Activated B cell treated with CpG ODN at 0.5 μM for 24 hours (primary cell): ENCODE measurements at regions of chr10 and their contacts with region 1.

Region 1: DNA sequence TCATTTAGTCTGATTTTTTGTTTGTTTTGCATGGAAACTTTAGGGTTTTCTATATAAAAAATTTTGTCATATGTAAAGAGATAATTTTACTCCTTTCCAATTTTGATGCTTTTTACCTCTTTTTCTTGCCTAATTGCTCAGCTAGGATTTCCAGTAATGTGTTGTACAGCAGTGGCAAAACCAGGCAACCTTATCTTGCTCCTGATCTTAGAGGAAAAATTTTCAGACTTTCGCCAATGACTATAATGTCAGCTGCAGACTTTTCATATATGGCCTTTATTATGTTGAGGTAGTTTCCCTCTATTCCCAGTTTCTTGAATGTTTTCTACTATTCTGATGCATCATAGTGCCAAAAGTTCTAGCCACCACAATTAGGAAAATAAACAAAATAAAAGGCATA is 126.3 kb downstream of the ALOX5 start:
- DNase-seq: no peak
- ATAC-seq: no peak
- H3K4me3 Mint-ChIP-seq: no peak overlapping the region
- H3K27ac Mint-ChIP-seq: no peak overlapping the region
- H3K4me1 Mint-ChIP-seq: peaks cover 8% of the 10 kb centered on the region
- H3K27me3 Mint-ChIP-seq: no peaks in the 10 kb centered on the region
- CTCF ChIP-seq: no peak

Region 2: DNA sequence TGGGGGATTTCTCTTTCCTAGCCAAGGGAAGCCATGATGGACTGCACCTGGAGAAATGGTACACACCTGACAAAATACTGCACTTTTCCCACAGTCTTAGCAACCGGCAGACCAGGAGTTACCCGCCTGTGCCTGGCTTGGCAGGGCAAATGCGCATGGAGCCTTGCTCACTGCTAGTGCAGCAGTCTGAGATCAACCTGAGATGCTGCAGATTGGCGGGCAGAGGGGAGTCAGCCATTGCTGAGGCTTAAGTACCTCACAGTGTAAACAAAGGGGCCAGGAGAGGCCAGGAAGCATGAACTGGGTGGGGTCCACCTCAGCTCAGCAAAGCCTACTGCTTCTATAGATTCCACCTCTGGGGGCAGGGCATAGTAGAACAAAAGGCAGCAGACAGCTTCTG is 234.3 kb before region 1 on chr10:
- CTCF ChIA-PET with region 1: no interaction called
- POLR2A ChIA-PET with region 1: no interaction called
- intact Hi-C with region 1: no loop called
- DNase-seq: no peak
- ATAC-seq: no peak
- H3K4me3 Mint-ChIP-seq: no peak overlapping the region
- H3K27ac Mint-ChIP-seq: no peak overlapping the region
- H3K4me1 Mint-ChIP-seq: no peaks in the 10 kb centered on the region
- H3K27me3 Mint-ChIP-seq: peaks cover 11% of the 10 kb centered on the region
- CTCF ChIP-seq: no peak

Region 3: GRCh38 chr10:45515630-45516029 is 15.3 kb after region 1 on chr10:
- CTCF ChIA-PET with region 1: no interaction called
- POLR2A ChIA-PET with region 1: no interaction called
- intact Hi-C with region 1: loop called (anchors 2 kb)
- DNase-seq: no peak
- ATAC-seq: no peak
- H3K4me3 Mint-ChIP-seq: no peak overlapping the region
- H3K27ac Mint-ChIP-seq: no peak overlapping the region
- H3K4me1 Mint-ChIP-seq: peaks cover 13% of the 10 kb centered on the region
- H3K27me3 Mint-ChIP-seq: no peaks in the 10 kb centered on the region
- CTCF ChIP-seq: no peak